ENCODE measurements at regions of chr9 and their contacts with region 1.

Region 1: DNA sequence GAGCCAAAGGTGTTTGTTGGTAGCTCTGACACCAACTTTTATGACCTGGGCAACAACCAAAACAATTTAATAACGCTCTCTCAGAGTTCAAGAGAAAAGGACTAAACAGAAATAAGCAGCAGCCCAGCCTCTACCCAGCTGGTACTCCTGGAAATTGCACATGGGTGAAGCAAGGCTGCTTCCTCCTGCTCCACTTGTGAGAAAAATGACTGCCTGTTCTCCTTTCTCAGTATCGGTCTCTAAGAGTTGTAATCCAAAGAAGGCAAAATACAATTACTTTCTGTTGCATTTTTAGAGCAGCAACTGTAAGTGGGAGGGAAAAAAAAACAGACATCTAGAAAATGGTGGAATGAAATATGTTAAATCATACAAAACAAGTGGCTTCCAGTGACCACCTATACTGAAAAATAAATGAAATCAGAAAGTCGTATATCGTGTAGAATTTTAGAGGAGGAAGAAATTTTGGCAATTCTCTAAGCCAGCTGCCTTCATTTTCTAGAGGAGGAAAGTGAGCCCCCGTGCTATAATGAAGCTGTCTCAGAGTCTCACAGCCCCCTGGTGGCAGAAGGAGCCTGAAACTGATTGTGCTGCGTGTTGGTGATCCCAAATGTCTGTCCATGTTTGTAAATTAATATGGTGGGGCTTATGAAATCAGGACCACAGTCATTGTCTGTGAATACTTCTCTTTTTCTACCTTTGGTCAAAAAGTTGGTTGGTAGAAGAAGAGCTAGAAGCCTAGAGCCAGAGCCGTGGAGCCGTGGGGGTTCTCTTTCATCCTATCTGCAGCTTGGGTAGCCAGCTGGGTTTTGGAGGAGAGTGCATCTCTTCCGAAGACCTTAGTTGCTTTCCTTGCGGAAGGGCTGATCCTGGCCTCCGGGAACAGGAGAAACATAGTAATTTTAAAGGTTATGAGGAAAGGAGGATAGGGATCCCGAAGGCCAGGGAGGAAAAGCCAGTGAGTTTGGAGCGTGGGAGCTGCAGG is 139.9 kb downstream of the PIP5K1B start:
- DNase-seq: peak; percentile 25
- ATAC-seq: peak; percentile 78
- H3K4me3 ChIP-seq: no peak overlapping the region
- H3K27ac ChIP-seq: no peak overlapping the region
- H3K4me1 ChIP-seq: no peaks in the 10 kb centered on the region
- H3K27me3 ChIP-seq: no peaks in the 10 kb centered on the region
- CTCF ChIP-seq: peak; percentile 55
- EP300 ChIP-seq: no peak
- POLR2A ChIP-seq: no peak
- RAD21 ChIP-seq: no peak

Region 2: GRCh38 chr9:68919661-68920060 is 74.7 kb after region 1 on chr9:
- CTCF ChIA-PET with region 1: no interaction called
- POLR2A ChIA-PET with region 1: no interaction called
- in situ Hi-C with region 1: loop called (anchors 10 kb)
- intact Hi-C with region 1: no loop called
- DNase-seq: no peak
- ATAC-seq: no peak
- H3K4me3 ChIP-seq: no peak overlapping the region
- H3K27ac ChIP-seq: no peak overlapping the region
- H3K4me1 ChIP-seq: no peaks in the 10 kb centered on the region
- H3K27me3 ChIP-seq: no peaks in the 10 kb centered on the region
- CTCF ChIP-seq: no peak
- EP300 ChIP-seq: no peak
- POLR2A ChIP-seq: no peak
- RAD21 ChIP-seq: no peak

Region 3: GRCh38 chr9:68999393-69000105 is 154.6 kb after region 1 on chr9:
- CTCF ChIA-PET with region 1: no interaction called
- POLR2A ChIA-PET with region 1: no interaction called
- in situ Hi-C with region 1: no loop called
- intact Hi-C with region 1: loop called (anchors 1 kb)
- DNase-seq: peak; percentile 75
- ATAC-seq: peak; percentile 98
- H3K4me3 ChIP-seq: no peak overlapping the region
- H3K27ac ChIP-seq: no peak overlapping the region
- H3K4me1 ChIP-seq: peaks cover 7% of the 10 kb centered on the region; the same call in 1 of the 2 replicates
- H3K27me3 ChIP-seq: no peaks in the 10 kb centered on the region
- CTCF ChIP-seq: peak; percentile 92
- EP300 ChIP-seq: no peak
- POLR2A ChIP-seq: no peak
- RAD21 ChIP-seq: peak; percentile 83